ENCODE measurements at regions of chr2 and their contacts with region 1.

Region 1: GRCh38 chr2:197986977-197987376 is 182.6 kb downstream of the PLCL1 start:
- DNase-seq: no peak
- H3K4me3 Mint-ChIP-seq: no peak overlapping the region
- H3K27ac Mint-ChIP-seq: no peak overlapping the region
- H3K4me1 Mint-ChIP-seq: no peaks in the 10 kb centered on the region
- H3K27me3 Mint-ChIP-seq: no peaks in the 10 kb centered on the region
- CTCF ChIP-seq: no peak

Region 2: DNA sequence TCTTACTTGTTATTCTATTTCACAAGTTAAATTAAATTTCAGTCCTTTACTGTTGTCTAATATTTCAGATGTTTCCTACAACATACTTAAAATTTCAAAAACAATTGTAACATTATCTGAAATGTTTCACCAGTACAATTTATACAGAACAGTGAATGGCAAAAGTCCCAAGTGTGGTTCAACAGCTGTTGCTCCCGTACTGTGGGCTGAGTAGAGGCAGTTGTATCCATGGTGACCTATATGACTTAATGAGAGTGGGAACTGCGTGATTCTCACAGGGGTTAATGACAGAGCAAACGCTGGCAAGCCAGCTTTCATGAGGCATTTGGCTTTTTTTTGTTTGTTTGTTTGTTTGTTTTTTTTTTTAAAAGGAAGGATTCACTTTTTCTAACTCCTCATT is 187.9 kb before region 1 on chr2:
- CTCF ChIA-PET with region 1: interaction called, 10 read pairs
- POLR2A ChIA-PET with region 1: interaction called, 3 read pairs
- intact Hi-C with region 1: loop called (anchors 1 kb)
- DNase-seq: no peak
- H3K4me3 Mint-ChIP-seq: no peak overlapping the region
- H3K27ac Mint-ChIP-seq: no peak overlapping the region
- H3K4me1 Mint-ChIP-seq: peaks cover 3% of the 10 kb centered on the region
- H3K27me3 Mint-ChIP-seq: no peaks in the 10 kb centered on the region
- CTCF ChIP-seq: no peak

Region 3: GRCh38 chr2:197804049-197804757 is 182.8 kb before region 1 on chr2 and contains the start of gene PLCL1:
- CTCF ChIA-PET with region 1: interaction called, 16 read pairs
- POLR2A ChIA-PET with region 1: interaction called, 3 read pairs
- intact Hi-C with region 1: loop called (anchors 1 kb)
- DNase-seq: peak; percentile 92
- H3K4me3 Mint-ChIP-seq: peak within 1 kb of the TSS; percentile 74
- H3K27ac Mint-ChIP-seq: peak within 1 kb of the TSS; percentile 73
- H3K4me1 Mint-ChIP-seq: peaks cover 6% of the 10 kb centered on the region
- H3K27me3 Mint-ChIP-seq: peaks cover 18% of the 10 kb centered on the region
- CTCF ChIP-seq: no peak
- total RNA-seq, gene PLCL1: 0.12 and 0.22 TPM in 2 replicates

Region 4: DNA sequence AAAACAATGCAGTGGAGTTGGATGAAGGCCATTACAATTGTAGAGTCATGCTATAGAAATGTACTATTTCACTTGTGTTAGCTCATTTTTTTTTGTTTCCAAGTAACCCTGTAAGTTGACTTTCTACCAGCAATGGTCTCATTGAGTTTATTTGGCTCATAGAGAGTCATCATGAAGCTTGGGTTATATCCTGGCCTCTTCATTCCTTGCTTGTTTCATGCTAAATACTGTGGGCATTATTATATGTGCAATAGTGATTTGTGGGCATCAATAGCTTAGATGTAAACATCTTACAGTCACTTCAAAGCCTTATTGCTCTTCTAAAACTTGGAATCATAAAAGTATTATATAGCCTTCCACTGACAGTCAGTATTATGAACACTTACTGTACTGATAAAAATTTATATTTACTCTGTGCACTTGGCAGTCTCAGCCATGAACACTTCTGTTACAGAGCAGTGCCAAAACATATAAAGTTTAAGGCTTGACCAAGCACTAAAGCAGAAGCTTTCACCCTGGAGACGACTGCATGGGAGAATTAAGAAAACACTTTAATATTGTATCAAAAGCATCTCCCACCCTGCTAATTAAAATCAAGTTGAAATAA is 719.6 kb after region 1 on chr2:
- CTCF ChIA-PET with region 1: no interaction called
- POLR2A ChIA-PET with region 1: no interaction called
- intact Hi-C with region 1: no loop called
- DNase-seq: no peak
- H3K4me3 Mint-ChIP-seq: no peak overlapping the region
- H3K27ac Mint-ChIP-seq: no peak overlapping the region
- H3K4me1 Mint-ChIP-seq: no peaks in the 10 kb centered on the region
- H3K27me3 Mint-ChIP-seq: peaks cover 39% of the 10 kb centered on the region
- CTCF ChIP-seq: no peak

Measured in MCF 10A (cell line).